Aorta (tissue), 5 donors: ENCODE measurements at regions of chr16 and their contacts with region 1.

Region 1: GRCh38 chr16:35795361-35796029 is 2336.1 kb downstream of the TP53TG3F start:
- DNase-seq: no peak
- ATAC-seq: no peak
- H3K4me3 ChIP-seq: no peak overlapping the region
- H3K27ac ChIP-seq: no peak overlapping the region
- H3K4me1 ChIP-seq: no peaks in the 10 kb centered on the region
- H3K27me3 ChIP-seq: no peaks in the 10 kb centered on the region

Region 2: DNA sequence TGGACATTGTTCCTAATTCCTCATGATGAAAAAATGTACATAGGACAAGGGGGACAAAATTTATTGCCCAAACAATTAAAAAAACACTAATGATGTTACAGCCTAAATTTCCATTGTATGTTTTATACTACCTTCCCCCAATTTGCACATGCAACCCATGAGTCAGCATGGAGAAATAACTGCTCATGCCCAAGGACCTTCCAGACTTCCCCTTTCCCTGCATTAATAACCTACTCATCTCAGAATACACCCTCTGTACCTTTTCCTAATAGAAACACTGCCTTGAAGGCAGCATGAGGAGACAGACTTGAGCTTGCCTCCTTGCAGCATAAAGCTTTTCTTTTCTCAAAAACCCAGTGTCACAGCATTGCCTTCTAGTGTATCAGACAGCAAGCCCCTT is 66.7 kb after region 1 on chr16:
- intact Hi-C with region 1: loop called in 1 of 2 experiments (anchors 10 kb)
- DNase-seq: no peak
- ATAC-seq: no peak
- H3K4me3 ChIP-seq: no peak overlapping the region
- H3K27ac ChIP-seq: no peak overlapping the region
- H3K4me1 ChIP-seq: no peaks in the 10 kb centered on the region
- H3K27me3 ChIP-seq: no peaks in the 10 kb centered on the region